A549 (cell line): ENCODE measurements at regions of chr12 and their contacts with region 1.

Region 1: DNA sequence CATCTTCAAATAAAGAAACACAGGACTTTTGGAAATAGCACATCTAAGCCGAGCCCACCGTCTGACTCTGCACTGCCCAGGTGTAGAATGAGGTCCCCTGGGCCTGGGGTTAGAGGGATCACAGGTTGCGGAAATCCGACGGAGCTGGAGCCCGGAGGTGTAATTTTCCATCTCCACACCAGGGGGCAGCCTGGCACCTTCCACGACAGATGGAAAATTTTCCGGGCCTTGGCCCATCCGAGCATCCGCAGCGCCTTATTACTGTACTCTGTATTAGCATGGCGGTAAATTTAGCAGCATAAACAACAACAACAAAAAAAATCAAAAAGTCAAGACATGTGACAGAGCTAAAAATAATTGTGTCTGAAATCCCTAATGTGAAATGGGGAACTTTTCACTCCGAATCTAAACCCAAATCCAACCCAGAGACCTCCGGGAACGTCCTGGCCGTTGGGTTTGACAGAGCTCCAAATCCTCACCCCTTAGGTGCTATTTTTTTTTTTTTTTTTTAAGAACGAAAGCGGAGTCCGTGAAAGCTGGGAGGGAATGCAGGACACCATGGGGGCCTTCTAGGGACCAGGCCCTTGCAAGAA is 93.9 kb downstream of the KSR2 start:
- DNase-seq: peak; percentile 62 to 73
- ATAC-seq: peak; percentile 75 to 88
- H3K4me3 ChIP-seq: no peak overlapping the region
- H3K27ac ChIP-seq: no peak overlapping the region
- H3K4me1 ChIP-seq: no peaks in the 10 kb centered on the region
- CTCF ChIP-seq: peak; percentile 94
- EP300 ChIP-seq: no peak
- POLR2A ChIP-seq: no peak
- RAD21 ChIP-seq: peak; percentile 95 to 96

Region 2: GRCh38 chr12:117857632-117858612 is 17.0 kb before region 1 on chr12:
- CTCF ChIA-PET with region 1: interaction called, 60 read pairs
- POLR2A ChIA-PET with region 1: no interaction called
- DNase-seq: peak; percentile 70 to 79
- ATAC-seq: peak; percentile 49 to 64; a peak in 4 of 6 replicates
- H3K4me3 ChIP-seq: no peak overlapping the region
- H3K27ac ChIP-seq: peak overlapping the region; percentile 34 to 44; a peak in 4 of 6 replicates
- H3K4me1 ChIP-seq: peaks cover 29% of the 10 kb centered on the region
- CTCF ChIP-seq: peak; percentile 54
- EP300 ChIP-seq: no peak
- POLR2A ChIP-seq: no peak
- RAD21 ChIP-seq: peak in 1 of 2 experiments; percentile 27; a peak in 1 of 5 replicates

Region 3: DNA sequence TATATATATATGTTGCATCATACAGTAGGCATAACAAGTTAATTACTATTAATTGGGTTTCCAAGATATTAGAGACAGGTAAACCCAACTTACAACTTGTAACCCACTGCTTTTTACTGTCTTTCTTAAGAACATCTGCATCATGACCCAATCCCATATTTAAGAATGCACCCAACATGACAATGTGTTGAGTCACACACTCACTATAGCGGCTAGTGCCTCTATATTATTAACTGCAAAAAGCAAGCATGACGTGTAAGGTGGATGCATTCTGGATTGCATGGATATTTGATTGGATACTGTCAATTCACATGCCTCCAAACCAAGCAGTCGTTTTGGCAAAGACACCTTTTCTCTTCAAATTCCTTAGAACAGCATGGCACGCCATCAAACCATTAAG is 25.6 kb after region 1 on chr12:
- CTCF ChIA-PET with region 1: interaction called, 10 read pairs
- POLR2A ChIA-PET with region 1: no interaction called
- DNase-seq: peak; percentile 21 to 50
- ATAC-seq: peak; percentile 63 to 68; a peak in 3 of 6 replicates
- H3K4me3 ChIP-seq: no peak overlapping the region
- H3K27ac ChIP-seq: no peak overlapping the region
- H3K4me1 ChIP-seq: peaks cover 6% of the 10 kb centered on the region; the same call in 1 of the 3 replicates
- CTCF ChIP-seq: no peak
- EP300 ChIP-seq: no peak
- POLR2A ChIP-seq: no peak
- RAD21 ChIP-seq: no peak

Region 4: DNA sequence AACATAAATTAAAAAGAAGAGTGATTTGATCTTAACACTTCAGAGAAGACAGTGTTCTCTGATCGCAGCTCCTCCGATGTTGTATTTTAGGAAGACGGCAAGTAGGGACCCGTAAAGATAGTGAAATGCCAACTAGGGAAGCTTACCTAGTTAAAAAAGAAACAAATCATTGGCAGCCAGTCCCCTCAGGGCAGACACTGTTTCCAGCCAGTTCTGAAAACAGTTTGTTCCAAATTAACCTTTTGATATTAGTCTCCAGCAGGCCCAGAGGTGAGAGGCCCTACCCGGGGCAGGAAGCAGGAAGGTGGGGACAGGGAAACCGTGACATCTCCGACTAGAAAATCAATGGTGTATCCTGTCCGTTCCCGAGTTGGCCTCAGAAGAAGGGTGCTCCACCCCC is 37.8 kb after region 1 on chr12:
- CTCF ChIA-PET with region 1: no interaction called
- POLR2A ChIA-PET with region 1: no interaction called
- DNase-seq: no peak
- ATAC-seq: no peak
- H3K4me3 ChIP-seq: no peak overlapping the region
- H3K27ac ChIP-seq: no peak overlapping the region
- H3K4me1 ChIP-seq: no peaks in the 10 kb centered on the region
- CTCF ChIP-seq: no peak
- EP300 ChIP-seq: no peak
- POLR2A ChIP-seq: no peak
- RAD21 ChIP-seq: no peak

Region 5: GRCh38 chr12:118016424-118017264 is 141.7 kb after region 1 on chr12 and contains the start of gene RFC5:
- CTCF ChIA-PET with region 1: interaction called, 28 read pairs
- POLR2A ChIA-PET with region 1: no interaction called
- DNase-seq: peak; percentile 95 to 98
- ATAC-seq: peak; percentile 96 to 98
- H3K4me3 ChIP-seq: peak within 1 kb of the TSS; percentile 83
- H3K27ac ChIP-seq: peak within 1 kb of the TSS; percentile 79 to 88
- H3K4me1 ChIP-seq: peaks cover 16% of the 10 kb centered on the region
- CTCF ChIP-seq: no peak
- EP300 ChIP-seq: no peak
- POLR2A ChIP-seq: peak; percentile 75
- RAD21 ChIP-seq: peak in 1 of 2 experiments; percentile 14; a peak in 1 of 5 replicates
- polyA plus RNA-seq, gene RFC5: 64.7 and 66.9 TPM in 2 replicates

Region 6: GRCh38 chr12:118035246-118036041 is 160.5 kb after region 1 on chr12:
- CTCF ChIA-PET with region 1: interaction called, 203 read pairs
- POLR2A ChIA-PET with region 1: interaction called, 7 read pairs
- DNase-seq: peak in 1 of 2 experiments; percentile 62
- ATAC-seq: peak; percentile 83 to 85
- H3K4me3 ChIP-seq: no peak overlapping the region
- H3K27ac ChIP-seq: peak overlapping the region in 1 of 2 experiments; percentile 23; a peak in 1 of 6 replicates
- H3K4me1 ChIP-seq: peaks cover 15% of the 10 kb centered on the region; the same call in 2 of the 3 replicates
- CTCF ChIP-seq: no peak
- EP300 ChIP-seq: no peak
- POLR2A ChIP-seq: no peak
- RAD21 ChIP-seq: no peak

Region 7: GRCh38 chr12:118061011-118061875 is 186.3 kb after region 1 on chr12 and contains the start of gene WSB2:
- CTCF ChIA-PET with region 1: interaction called, 23 read pairs
- POLR2A ChIA-PET with region 1: no interaction called
- DNase-seq: peak; percentile 49 to 56
- ATAC-seq: peak; percentile 41 to 48
- H3K4me3 ChIP-seq: peak within 1 kb of the TSS; percentile 87
- H3K27ac ChIP-seq: peak within 1 kb of the TSS; percentile 98 to 100
- H3K4me1 ChIP-seq: peaks cover 51% of the 10 kb centered on the region
- CTCF ChIP-seq: no peak
- EP300 ChIP-seq: no peak
- POLR2A ChIP-seq: peak; percentile 49
- RAD21 ChIP-seq: no peak
- polyA plus RNA-seq, gene WSB2: 93.5 and 121 TPM in 2 replicates